ENCODE measurements at regions of chr1 and their contacts with region 1.

Region 1: DNA sequence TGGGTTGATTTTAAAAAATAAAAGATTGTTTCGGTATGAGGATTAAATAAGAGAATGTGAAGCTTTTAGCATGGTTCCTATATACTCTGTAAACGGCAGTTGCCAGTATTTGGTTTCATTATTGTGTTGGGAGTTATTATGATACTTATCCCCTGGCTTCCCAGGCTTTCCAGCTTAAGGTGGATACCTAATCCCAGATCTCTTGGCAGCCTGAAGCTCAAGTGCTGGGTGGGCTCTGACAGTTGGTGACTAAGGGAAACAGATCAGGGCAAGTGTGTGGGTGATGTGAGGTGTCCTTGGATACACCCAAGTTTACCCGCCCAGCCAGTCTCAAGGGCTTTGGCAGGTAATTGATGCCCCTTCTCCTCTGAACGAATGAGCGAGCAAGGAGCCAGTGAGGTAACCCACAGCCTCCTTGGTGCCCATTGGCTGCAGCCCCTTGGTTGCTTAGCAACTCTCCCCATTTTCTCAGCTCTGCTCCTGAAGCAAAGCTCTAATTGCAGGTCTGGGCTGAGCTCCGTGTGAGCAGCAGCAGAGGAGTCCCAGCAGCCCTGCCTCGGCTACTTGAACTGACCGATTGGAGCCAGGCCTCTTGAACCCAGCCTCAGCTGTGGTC is 6.1 kb downstream of the IPO13 start:
- DNase-seq: no peak
- H3K4me3 ChIP-seq: no peak overlapping the region
- CTCF ChIP-seq: no peak

Region 2: GRCh38 chr1:43763497-43763973 is 189.3 kb before region 1 on chr1:
- in situ Hi-C with region 1: loop called (anchors 10 kb)
- DNase-seq: peak; percentile 91
- H3K4me3 ChIP-seq: no peak overlapping the region
- CTCF ChIP-seq: peak; percentile 82

Region 3: GRCh38 chr1:44090429-44091252 is 137.8 kb after region 1 on chr1:
- in situ Hi-C with region 1: no loop called
- DNase-seq: no peak
- H3K4me3 ChIP-seq: no peak overlapping the region
- CTCF ChIP-seq: no peak